CD8-positive, alpha-beta memory T cell (primary cell): ENCODE measurements at regions of chr1 and their contacts with region 1.

Region 1: DNA sequence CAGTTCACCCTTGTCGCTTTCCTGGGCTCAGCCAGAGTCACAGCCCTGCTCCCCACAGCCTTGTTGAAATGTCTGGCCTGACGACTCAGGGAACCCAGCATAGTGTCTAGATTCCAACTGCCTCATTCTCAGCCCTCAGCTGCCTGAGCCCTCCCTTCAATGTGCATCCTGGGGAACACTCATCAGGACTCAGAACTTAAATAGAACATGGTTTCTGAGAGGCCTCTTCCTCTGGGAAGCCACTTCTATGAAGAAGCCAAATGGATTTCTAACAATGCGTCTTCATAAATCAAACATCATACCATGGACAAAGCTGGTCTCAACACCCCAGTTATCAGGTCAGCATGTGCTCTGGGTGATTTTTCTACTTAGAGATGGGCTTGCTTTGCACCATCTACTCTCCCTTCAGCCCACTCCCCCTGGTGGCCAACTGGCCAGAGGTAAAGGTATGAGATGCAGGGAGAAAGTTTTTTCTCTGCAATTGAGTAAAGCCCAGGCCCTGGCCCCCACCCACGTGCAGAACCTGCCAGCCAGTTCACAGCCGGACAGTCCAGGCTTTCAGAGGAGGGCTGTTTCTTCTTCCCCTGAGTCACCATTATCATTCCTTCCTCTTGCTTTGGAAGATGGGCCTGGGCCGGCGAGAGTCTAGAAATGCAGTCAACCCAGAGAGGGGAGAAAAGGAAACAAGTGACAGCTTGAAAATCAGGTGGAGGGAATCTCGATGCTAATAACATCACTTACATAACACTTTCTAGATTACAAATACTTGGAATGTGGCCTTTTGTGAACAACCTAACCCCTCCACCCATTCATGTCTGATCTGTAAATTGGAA is 32.1 kb downstream of the CD244 start:
- DNase-seq: peak; percentile 50 to 84 (median 64)
- H3K4me3 ChIP-seq: no peak overlapping the region
- H3K4me3 Mint-ChIP-seq: no peak overlapping the region
- H3K27ac ChIP-seq: no peak overlapping the region
- H3K27ac Mint-ChIP-seq: peak overlapping the region; percentile 18 to 95 (median 78)
- H3K4me1 ChIP-seq: peaks cover 25% of the 10 kb centered on the region
- H3K4me1 Mint-ChIP-seq: peaks cover 32 to 50% (median 49%) of the 10 kb centered on the region in 3 donors
- H3K27me3 ChIP-seq: no peaks in the 10 kb centered on the region
- H3K27me3 Mint-ChIP-seq: no peaks in the 10 kb centered on the region

Region 2: DNA sequence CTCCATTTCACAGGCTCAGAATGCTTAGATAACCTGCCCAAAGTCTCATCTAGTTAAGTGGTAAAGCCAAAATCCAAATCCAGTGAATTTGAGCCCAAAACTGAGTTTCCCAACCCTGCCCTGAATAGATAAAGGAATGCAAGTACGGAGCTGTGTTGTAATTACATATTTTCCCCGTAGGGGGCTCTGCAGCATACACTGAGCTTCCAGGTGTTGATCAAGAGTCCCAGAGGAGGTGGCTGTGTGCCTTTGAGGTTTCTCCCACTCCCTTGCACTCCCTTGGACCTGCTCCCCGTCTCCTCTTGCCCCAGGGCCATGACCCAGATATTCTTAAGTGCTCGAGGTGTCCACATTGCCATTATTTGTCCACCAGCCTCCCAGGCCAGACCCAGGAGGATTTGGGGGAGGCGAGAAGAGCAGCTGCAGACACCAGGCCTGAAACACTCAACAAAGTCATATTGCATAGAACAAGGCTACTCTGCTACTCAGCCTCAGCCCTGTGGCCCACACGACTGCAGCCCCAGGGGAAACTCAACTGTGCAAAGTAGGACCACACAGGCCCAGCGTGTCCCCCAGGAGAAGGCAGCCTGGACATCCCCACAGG is 52.9 kb before region 1 on chr1:
- CTCF ChIA-PET with region 1: interaction called, 34 read pairs
- POLR2A ChIA-PET with region 1: interaction called, 6 read pairs
- DNase-seq: peak in 4 of 5 donors; percentile 31 to 64 (median 62)
- H3K4me3 ChIP-seq: no peak overlapping the region
- H3K4me3 Mint-ChIP-seq: peak overlapping the region in 1 of 7 donors; percentile 21
- H3K27ac ChIP-seq: no peak overlapping the region
- H3K27ac Mint-ChIP-seq: peak overlapping the region in 3 of 8 donors; percentile 45 to 90 (median 70)
- H3K4me1 ChIP-seq: peaks cover 7% of the 10 kb centered on the region
- H3K4me1 Mint-ChIP-seq: peaks cover 16 to 27% (median 26%) of the 10 kb centered on the region in 3 donors
- H3K27me3 ChIP-seq: no peaks in the 10 kb centered on the region
- H3K27me3 Mint-ChIP-seq: no peaks in the 10 kb centered on the region

Region 3: GRCh38 chr1:160818207-160818937 is 12.2 kb before region 1 on chr1:
- CTCF ChIA-PET with region 1: interaction called, 10 read pairs
- POLR2A ChIA-PET with region 1: no interaction called
- DNase-seq: no peak
- H3K4me3 ChIP-seq: no peak overlapping the region
- H3K4me3 Mint-ChIP-seq: no peak overlapping the region
- H3K27ac ChIP-seq: no peak overlapping the region
- H3K27ac Mint-ChIP-seq: peak overlapping the region; percentile 6 to 95 (median 40)
- H3K4me1 ChIP-seq: peaks cover under 1% of the 10 kb centered on the region
- H3K4me1 Mint-ChIP-seq: peaks cover 12 to 15% (median 14%) of the 10 kb centered on the region in 3 donors
- H3K27me3 ChIP-seq: no peaks in the 10 kb centered on the region
- H3K27me3 Mint-ChIP-seq: peaks cover 0 to 1% of the 10 kb centered on the region in 2 donors